ENCODE measurements at regions of chr3 and their contacts with region 1.

Region 1: DNA sequence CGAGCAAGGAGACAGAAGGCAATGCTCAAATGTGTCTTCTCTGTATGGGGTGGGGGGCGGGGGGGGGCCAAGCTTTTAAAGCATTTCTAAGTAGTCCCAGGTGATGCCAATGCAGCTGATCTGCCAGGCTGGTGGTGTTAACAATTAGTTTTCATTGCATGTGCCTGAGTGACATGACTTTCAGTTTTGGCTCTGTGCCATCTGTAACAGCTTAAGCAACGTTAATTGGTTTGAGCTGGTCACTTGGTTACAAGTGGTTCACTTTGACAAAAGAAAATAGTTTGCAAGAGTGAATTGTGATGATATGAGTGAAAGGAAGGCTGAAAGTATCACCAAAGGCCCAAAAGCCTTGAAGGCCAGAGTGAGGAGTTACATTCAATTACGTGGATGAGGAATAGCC is 26.4 kb upstream of the LRIG1 start:
- DNase-seq: no peak
- ATAC-seq: no peak
- H3K4me3 Mint-ChIP-seq: no peak overlapping the region
- H3K27ac Mint-ChIP-seq: no peak overlapping the region
- H3K4me1 Mint-ChIP-seq: peaks cover 4% of the 10 kb centered on the region
- H3K27me3 Mint-ChIP-seq: peaks cover 11% of the 10 kb centered on the region

Region 2: DNA sequence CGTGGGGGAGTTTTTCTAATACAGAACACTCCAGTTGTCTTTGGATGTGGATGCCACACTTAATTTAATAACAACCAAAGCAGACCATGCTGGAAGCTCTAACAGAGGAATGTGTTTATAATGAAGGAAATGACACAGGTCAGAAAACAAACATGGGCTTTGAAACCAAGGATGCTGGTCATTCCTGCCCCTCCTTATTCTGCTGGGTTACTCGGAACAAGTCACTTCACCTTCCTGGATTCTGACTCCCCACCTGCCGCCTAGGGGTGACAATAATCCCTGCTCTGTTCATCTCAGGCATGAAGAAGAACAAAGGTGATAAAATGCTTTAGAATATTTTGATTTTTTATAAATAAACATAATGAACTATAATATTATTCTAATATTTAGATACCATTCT is 1598.5 kb before region 1 on chr3:
- CTCF ChIA-PET with region 1: no interaction called
- POLR2A ChIA-PET with region 1: no interaction called
- intact Hi-C with region 1: no loop called
- DNase-seq: no peak
- ATAC-seq: no peak
- H3K4me3 Mint-ChIP-seq: no peak overlapping the region
- H3K27ac Mint-ChIP-seq: no peak overlapping the region
- H3K4me1 Mint-ChIP-seq: no peaks in the 10 kb centered on the region
- H3K27me3 Mint-ChIP-seq: no peaks in the 10 kb centered on the region

Region 3: DNA sequence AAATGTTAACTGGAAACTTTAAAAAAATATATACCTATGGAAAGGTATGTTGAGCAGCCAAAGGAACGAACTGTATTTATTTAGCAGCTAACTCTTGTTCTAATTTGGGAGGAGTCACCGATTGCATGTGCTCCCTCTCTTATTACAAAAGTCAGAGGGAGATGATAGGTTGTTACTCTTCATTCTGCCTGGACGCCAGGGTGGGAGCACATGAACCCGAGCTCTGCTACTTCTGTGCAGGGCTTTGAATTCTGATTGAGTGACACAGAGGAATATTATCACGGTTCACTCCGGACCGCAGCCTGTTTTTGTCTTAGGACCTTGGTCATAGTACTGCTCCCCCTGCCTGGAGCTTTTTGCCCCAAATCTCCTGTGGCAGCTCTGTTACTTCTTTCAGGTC is 10.5 kb after region 1 on chr3:
- CTCF ChIA-PET with region 1: interaction called, 3 read pairs
- POLR2A ChIA-PET with region 1: no interaction called
- intact Hi-C with region 1: loop called in 1 of 2 experiments (anchors 1 kb)
- DNase-seq: no peak
- ATAC-seq: no peak
- H3K4me3 Mint-ChIP-seq: no peak overlapping the region
- H3K27ac Mint-ChIP-seq: no peak overlapping the region
- H3K4me1 Mint-ChIP-seq: no peaks in the 10 kb centered on the region
- H3K27me3 Mint-ChIP-seq: no peaks in the 10 kb centered on the region